ENCODE measurements at regions of chr1 and their contacts with region 1.

Region 1: DNA sequence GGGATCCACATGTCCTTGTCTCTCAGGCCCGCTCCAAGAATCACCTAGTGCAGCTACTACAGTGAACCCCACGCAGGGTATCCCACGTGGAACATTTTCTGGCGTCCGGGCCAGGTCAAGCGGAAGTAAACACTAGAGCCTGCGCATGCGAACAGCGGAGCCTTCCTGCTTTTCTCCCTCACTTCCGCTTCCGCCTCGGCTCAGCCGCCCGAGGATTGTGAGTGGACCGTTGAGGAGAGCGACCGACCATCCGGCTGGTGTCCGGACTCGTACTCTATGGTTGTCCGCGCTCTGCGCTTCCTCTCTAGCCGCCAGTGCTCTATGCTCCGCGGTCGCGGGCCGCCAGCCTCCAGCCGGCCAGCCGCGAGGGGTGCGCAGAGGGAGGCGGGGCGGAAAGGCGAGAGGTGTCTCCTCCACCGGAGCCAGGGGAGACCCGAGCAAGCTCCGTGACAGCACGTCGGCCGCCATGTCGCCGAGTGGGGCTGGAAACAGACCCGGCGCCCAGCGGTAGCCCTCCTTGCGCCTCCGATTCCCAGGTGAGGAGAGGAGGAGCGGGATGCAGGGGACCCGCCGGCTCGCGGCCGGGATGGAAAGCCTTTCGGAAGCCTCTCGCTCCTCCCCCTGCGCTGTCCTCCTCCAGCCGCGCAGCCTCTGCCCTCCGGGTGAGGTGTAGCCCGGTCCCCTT is at the starts of genes CNST and TFB2M:
- DNase-seq: peak; percentile 95
- ATAC-seq: peak; percentile 89
- H3K4me3 Mint-ChIP-seq: peak within 1 kb of the TSS; percentile 99
- H3K27ac Mint-ChIP-seq: peak within 1 kb of the TSS; percentile 97
- H3K4me1 Mint-ChIP-seq: peaks cover 60% of the 10 kb centered on the region
- H3K27me3 Mint-ChIP-seq: no peaks in the 10 kb centered on the region
- CTCF ChIP-seq: no peak
- total RNA-seq, gene CNST: 30.2 and 35.2 TPM in 2 replicates
- total RNA-seq, gene TFB2M: 15.9 and 18.3 TPM in 2 replicates

Region 2: GRCh38 chr1:246317341-246318035 is 248.8 kb before region 1 on chr1:
- CTCF ChIA-PET with region 1: no interaction called
- POLR2A ChIA-PET with region 1: no interaction called
- intact Hi-C with region 1: no loop called
- DNase-seq: no peak
- ATAC-seq: no peak
- H3K4me3 Mint-ChIP-seq: no peak overlapping the region
- H3K27ac Mint-ChIP-seq: no peak overlapping the region
- H3K4me1 Mint-ChIP-seq: no peaks in the 10 kb centered on the region
- H3K27me3 Mint-ChIP-seq: no peaks in the 10 kb centered on the region
- CTCF ChIP-seq: no peak

Region 3: GRCh38 chr1:246544001-246544400 is 22.3 kb before region 1 on chr1:
- CTCF ChIA-PET with region 1: no interaction called
- POLR2A ChIA-PET with region 1: no interaction called
- intact Hi-C with region 1: no loop called
- DNase-seq: no peak
- ATAC-seq: no peak
- H3K4me3 Mint-ChIP-seq: no peak overlapping the region
- H3K27ac Mint-ChIP-seq: no peak overlapping the region
- H3K4me1 Mint-ChIP-seq: no peaks in the 10 kb centered on the region
- H3K27me3 Mint-ChIP-seq: no peaks in the 10 kb centered on the region
- CTCF ChIP-seq: no peak

Region 4: DNA sequence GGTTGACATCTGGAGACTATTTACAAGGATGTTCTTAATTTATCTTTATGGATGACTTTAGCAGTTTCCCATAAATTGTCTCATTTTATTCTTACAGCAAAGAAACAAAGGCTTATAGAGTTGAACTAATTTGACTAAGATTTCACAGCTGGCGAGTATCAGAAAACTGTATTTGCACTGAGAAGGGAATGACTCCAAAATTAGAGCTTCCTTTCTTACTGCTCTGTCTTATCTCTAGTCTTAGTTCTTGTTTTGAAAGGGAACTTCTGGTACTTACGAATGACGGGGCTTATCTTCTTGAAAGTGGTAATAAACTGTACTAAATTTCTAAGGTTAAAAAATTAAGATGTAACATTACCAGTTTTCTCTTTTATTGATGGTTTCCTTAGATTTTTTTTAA is 13.5 kb after region 1 on chr1:
- CTCF ChIA-PET with region 1: no interaction called
- POLR2A ChIA-PET with region 1: interaction called, 34 read pairs
- intact Hi-C with region 1: loop called (anchors 1 kb)
- DNase-seq: no peak
- ATAC-seq: peak; percentile 75
- H3K4me3 Mint-ChIP-seq: peak overlapping the region; percentile 55
- H3K27ac Mint-ChIP-seq: peak overlapping the region; percentile 66
- H3K4me1 Mint-ChIP-seq: peaks cover 60% of the 10 kb centered on the region
- H3K27me3 Mint-ChIP-seq: no peaks in the 10 kb centered on the region
- CTCF ChIP-seq: no peak

Region 5: GRCh38 chr1:246681900-246682299 is 115.6 kb after region 1 on chr1:
- CTCF ChIA-PET with region 1: no interaction called
- POLR2A ChIA-PET with region 1: interaction called, 5 read pairs
- intact Hi-C with region 1: loop called (anchors 5 kb)
- DNase-seq: no peak
- ATAC-seq: peak; percentile 89
- H3K4me3 Mint-ChIP-seq: no peak overlapping the region
- H3K27ac Mint-ChIP-seq: no peak overlapping the region
- H3K4me1 Mint-ChIP-seq: peaks cover 15% of the 10 kb centered on the region
- H3K27me3 Mint-ChIP-seq: no peaks in the 10 kb centered on the region
- CTCF ChIP-seq: no peak

Region 6: DNA sequence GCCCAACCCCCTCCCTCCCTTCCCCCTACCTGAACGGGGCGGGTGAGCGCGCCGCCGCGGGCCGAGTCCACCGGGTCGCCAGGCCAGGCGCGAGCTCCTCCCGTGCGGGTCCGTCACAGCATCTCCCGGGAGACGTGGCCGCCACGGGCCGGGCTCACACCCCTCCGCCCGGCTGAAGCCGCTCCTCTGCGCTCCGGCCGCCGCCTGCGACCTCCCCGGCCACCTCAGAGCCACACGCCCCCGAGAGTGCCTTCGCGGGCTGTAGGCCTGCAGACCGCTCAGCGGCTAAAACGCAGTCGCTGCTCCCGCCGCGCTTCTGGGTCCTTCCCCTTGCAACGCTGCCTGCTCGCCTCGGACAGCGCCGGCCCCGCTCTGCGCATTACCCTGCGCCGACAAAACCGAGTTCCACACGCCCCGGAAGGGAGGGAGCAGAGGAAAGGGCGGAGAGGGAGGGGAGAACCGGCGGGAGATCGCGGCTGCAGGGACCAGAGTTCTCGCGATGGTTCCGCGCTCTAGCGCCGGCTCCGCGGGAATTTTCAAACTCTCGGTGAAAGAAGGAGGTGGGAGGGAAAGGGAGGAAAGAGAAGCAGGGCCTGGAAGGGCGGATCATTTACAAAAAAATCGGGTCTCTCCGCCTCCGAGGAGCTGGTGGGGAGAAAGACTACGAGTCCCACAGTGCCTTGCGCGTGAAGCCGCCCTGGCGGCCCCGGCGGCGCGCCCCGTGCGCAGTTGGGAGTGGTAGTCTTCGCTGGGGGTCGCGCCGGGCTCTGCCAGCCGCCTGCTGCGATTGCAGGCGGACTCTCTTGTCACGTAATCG is 365.5 kb after region 1 on chr1 and contains the start of gene AHCTF1:
- CTCF ChIA-PET with region 1: no interaction called
- POLR2A ChIA-PET with region 1: interaction called, 4 read pairs
- intact Hi-C with region 1: loop called (anchors 1 kb)
- DNase-seq: peak; percentile 87
- ATAC-seq: peak; percentile 88
- H3K4me3 Mint-ChIP-seq: peak within 1 kb of the TSS; percentile 92
- H3K27ac Mint-ChIP-seq: peak within 1 kb of the TSS; percentile 96
- H3K4me1 Mint-ChIP-seq: peaks cover 29% of the 10 kb centered on the region
- H3K27me3 Mint-ChIP-seq: no peaks in the 10 kb centered on the region
- CTCF ChIP-seq: no peak
- total RNA-seq, gene AHCTF1: 25.3 and 31.3 TPM in 2 replicates

Measured in activated B cell treated with CpG ODN at 0.5 μM for 24 hours (primary cell).